ENCODE measurements at regions of chr1 and their contacts with region 1.

Region 1: DNA sequence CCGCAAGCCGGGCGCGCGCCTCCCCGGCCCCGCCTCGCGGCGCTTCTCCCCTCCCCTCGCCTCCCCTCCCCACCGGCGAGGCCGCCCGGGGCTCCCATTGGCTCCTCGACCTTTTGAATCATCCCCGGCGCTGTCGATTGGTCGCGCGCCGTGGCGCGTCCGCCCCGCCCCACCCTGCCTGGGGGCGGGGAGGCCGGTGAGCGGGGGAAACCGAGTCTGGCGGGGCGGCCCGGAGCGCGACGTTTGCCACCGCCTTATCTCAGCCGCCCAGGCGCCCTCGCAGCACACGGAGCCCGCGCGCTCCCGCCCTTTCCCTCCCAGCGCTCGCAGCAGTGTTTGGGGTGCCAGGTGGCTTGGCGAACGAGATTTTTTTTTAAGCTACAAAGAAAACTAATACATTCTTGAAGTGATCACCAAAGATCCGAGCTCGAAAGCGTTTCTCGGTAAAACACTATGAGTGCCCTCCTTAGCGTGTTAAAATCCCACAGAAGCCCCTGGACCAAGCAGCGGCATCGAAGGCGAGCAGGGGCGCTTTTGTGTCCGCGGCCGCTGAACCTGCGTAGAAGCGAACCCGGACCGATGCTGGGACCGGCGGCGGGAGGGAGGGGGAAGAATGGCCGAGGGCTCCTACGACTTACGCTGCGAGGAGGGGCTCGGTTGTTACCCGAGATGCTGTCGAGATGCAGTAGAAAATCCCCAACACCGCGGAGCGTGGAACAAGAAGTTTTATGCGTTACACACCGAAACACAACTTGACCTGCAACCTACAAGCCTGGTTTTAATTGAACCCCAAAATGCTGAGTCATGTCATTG is 436 bp upstream of the LBR start:
- DNase-seq: peak; percentile 90
- H3K4me3 ChIP-seq: peak overlapping the region; percentile 37 to 79 (median 68)
- H3K27ac ChIP-seq: peak overlapping the region; percentile 75
- H3K4me1 ChIP-seq: peaks cover 39% of the 10 kb centered on the region
- H3K27me3 ChIP-seq: peaks cover 0 to 1% of the 10 kb centered on the region in 2 experiments
- CTCF ChIP-seq: no peak
- POLR2A ChIP-seq: peak; percentile 23

Region 2: DNA sequence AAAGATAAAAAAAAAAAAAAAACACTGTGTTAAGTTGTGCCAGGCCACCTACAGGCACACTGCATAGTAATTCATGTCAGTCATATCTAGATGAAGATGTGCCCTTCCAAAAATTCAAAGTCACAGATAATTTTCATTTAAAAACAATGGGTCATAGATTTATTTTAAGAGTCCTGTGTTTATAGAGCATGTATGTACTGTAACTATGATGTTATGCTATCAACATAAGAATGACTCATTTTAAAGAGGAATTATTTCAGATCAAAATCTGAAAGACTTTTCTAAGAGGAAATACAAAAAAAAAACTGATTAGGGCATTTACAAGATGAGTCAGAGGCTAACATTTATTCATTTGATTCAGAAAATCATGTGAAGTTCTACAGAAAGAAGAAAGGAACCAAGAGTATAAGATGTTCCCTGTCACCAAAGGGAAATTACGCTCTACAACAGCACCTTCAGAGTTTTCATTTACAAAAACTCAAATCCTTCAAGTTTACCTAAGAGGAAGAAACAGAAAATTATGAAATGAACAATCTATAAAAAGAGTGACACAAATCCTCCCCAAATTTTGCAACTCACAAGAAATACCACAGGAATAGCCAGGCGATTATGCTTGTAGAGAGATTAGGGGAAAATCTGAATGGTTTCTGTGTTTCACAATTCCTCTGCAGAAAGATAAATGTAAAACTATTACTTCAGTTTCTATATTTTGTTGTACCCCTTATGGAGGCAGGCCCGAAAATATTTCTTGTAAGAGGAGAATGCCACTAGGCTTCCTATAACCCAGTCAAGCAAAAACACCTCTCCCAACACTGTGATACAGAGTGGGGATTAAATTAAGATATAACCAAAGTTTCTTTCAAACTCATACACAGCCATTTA is 1596.3 kb before region 1 on chr1:
- CTCF ChIA-PET with region 1: no interaction called
- POLR2A ChIA-PET with region 1: no interaction called
- dilution Hi-C with region 1: no loop called
- intact Hi-C with region 1: loop called (anchors 5 kb)
- DNase-seq: peak; percentile 76
- H3K4me3 ChIP-seq: peak overlapping the region in 1 of 3 experiments; percentile 38
- H3K27ac ChIP-seq: peak overlapping the region; percentile 86
- H3K4me1 ChIP-seq: peaks cover 56% of the 10 kb centered on the region
- H3K27me3 ChIP-seq: no peaks in the 10 kb centered on the region
- CTCF ChIP-seq: no peak
- POLR2A ChIP-seq: no peak

Region 3: GRCh38 chr1:225441314-225442122 is 13.2 kb after region 1 on chr1:
- CTCF ChIA-PET with region 1: interaction called, 31 read pairs
- POLR2A ChIA-PET with region 1: interaction called, 3 read pairs
- dilution Hi-C with region 1: no loop called
- intact Hi-C with region 1: loop called (anchors 1 kb)
- DNase-seq: no peak
- H3K4me3 ChIP-seq: no peak overlapping the region
- H3K27ac ChIP-seq: no peak overlapping the region
- H3K4me1 ChIP-seq: peaks cover 33% of the 10 kb centered on the region
- H3K27me3 ChIP-seq: no peaks in the 10 kb centered on the region
- CTCF ChIP-seq: peak; percentile 20 to 22
- POLR2A ChIP-seq: no peak

Region 4: GRCh38 chr1:225447650-225448089 is 19.4 kb after region 1 on chr1:
- CTCF ChIA-PET with region 1: interaction called, 7 read pairs
- POLR2A ChIA-PET with region 1: interaction called, 3 read pairs
- dilution Hi-C with region 1: no loop called
- intact Hi-C with region 1: loop called (anchors 1 kb)
- DNase-seq: no peak
- H3K4me3 ChIP-seq: no peak overlapping the region
- H3K27ac ChIP-seq: no peak overlapping the region
- H3K4me1 ChIP-seq: peaks cover 37% of the 10 kb centered on the region
- H3K27me3 ChIP-seq: peaks cover 2% of the 10 kb centered on the region in 2 experiments
- CTCF ChIP-seq: no peak
- POLR2A ChIP-seq: no peak

Measured in endothelial cell of umbilical vein (primary cell).